ENCODE measurements at regions of chr14 and their contacts with region 1.

Region 1: GRCh38 chr14:68905107-68905895 is 73.8 kb downstream of the ACTN1 start:
- DNase-seq: no peak
- ATAC-seq: no peak
- H3K4me3 ChIP-seq: no peak overlapping the region
- H3K27ac ChIP-seq: no peak overlapping the region
- H3K4me1 ChIP-seq: no peaks in the 10 kb centered on the region
- H3K27me3 ChIP-seq: no peaks in the 10 kb centered on the region

Region 2: DNA sequence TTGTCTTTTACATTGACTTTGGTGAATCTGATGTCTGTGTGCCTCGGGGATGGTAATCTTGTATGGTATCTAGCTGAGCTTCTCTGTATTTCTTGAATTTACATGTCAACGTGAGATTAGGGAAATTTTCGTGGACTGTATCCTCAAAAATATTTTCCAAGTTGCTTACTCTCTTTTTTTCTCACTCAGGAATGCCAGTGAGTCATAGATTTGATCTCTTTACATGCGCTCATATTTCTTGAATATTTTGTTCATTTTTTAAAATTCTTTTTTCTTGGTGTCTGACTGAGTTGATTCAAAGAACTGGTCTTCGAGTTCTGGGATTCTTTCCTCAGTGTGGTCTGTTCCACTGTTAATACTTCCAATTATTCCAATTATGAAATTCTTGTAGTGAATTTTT is 878.0 kb before region 1 on chr14:
- intact Hi-C with region 1: no loop called
- DNase-seq: no peak
- ATAC-seq: no peak
- H3K4me3 ChIP-seq: no peak overlapping the region
- H3K27ac ChIP-seq: no peak overlapping the region
- H3K4me1 ChIP-seq: no peaks in the 10 kb centered on the region
- H3K27me3 ChIP-seq: no peaks in the 10 kb centered on the region

Region 3: GRCh38 chr14:69090187-69090789 is 185.0 kb after region 1 on chr14:
- intact Hi-C with region 1: loop called in 1 of 4 experiments (anchors 10 kb)
- DNase-seq: no peak
- ATAC-seq: peak in 1 of 2 donors; percentile 56
- H3K4me3 ChIP-seq: no peak overlapping the region
- H3K27ac ChIP-seq: no peak overlapping the region
- H3K4me1 ChIP-seq: peaks cover 8% of the 10 kb centered on the region
- H3K27me3 ChIP-seq: no peaks in the 10 kb centered on the region

Measured in right cardiac atrium (tissue), 5 donors.